Mammary epithelial cell (primary cell): ENCODE measurements at regions of chr9 and their contacts with region 1.

Region 1: GRCh38 chr9:21789541-21790037 is 12.8 kb upstream of the MTAP start:
- DNase-seq: peak; percentile 83
- H3K4me3 ChIP-seq: peak overlapping the region in 2 of 3 experiments; percentile 1 to 30
- H3K27ac ChIP-seq: peak overlapping the region; percentile 30
- H3K4me1 ChIP-seq: peaks cover 6% of the 10 kb centered on the region
- H3K27me3 ChIP-seq: no peaks in the 10 kb centered on the region
- CTCF ChIP-seq: peak; percentile 69 to 85

Region 2: GRCh38 chr9:21317956-21318923 is 471.3 kb before region 1 on chr9:
- CTCF ChIA-PET with region 1: interaction called, 40 read pairs
- dilution Hi-C with region 1: no loop called
- in situ Hi-C with region 1: loop called (anchors 10 kb)
- intact Hi-C with region 1: loop called (anchors 1 kb)
- DNase-seq: peak; percentile 25
- H3K4me3 ChIP-seq: no peak overlapping the region
- H3K27ac ChIP-seq: no peak overlapping the region
- H3K4me1 ChIP-seq: peaks cover 10% of the 10 kb centered on the region
- H3K27me3 ChIP-seq: no peaks in the 10 kb centered on the region
- CTCF ChIP-seq: peak; percentile 69 to 76

Region 3: DNA sequence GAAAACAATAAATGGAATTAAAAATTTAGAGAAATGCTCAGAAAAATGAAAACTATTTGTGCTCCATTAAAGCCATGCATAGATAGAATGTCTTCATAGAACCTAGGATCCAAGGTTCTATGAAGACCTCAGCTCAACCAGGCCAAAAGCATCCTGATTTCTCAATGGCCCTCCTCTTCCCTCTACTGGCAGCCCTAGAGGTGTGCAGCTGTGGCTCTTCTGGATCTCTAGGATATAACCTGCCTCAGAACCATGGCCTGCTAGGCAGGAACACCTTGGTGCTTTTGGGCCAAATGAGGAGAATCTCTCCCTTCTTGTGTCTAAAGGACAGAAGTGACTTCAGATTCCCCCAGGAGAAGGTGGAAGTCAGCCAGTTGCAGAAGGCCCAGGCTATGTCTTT is 334.3 kb before region 1 on chr9:
- CTCF ChIA-PET with region 1: no interaction called
- dilution Hi-C with region 1: no loop called
- in situ Hi-C with region 1: loop called in 1 of 2 experiments (anchors 5 kb)
- intact Hi-C with region 1: no loop called
- DNase-seq: peak; percentile 19
- H3K4me3 ChIP-seq: no peak overlapping the region
- H3K27ac ChIP-seq: no peak overlapping the region
- H3K4me1 ChIP-seq: peaks cover 16% of the 10 kb centered on the region
- H3K27me3 ChIP-seq: no peaks in the 10 kb centered on the region
- CTCF ChIP-seq: peak; percentile 67 to 74

Region 4: DNA sequence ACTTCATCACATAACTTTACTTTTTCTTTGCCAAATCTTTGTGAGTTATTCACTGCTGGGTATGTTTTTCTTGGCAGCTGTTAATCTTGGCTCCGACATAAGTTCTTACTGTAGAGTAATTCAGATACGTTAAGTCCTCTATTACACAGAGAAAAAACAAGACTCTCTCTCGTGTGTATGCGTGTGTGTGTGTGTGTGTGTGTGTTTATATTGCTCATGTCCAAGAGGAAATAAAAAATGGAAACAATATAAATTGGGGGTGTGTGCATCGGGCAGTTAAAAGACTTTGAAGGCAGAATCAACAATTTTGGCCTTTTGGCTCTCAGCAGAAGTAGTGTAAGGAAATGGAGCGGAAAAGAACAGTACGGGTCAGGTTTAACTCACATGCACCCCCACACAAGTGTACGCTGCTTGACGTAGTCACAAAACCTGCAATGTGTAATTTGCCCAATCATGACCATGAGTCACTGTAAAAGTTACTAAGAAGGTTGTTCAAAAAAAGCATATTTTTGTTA is 240.3 kb before region 1 on chr9:
- CTCF ChIA-PET with region 1: no interaction called
- dilution Hi-C with region 1: loop called (anchors 5 kb)
- in situ Hi-C with region 1: loop called (anchors 10 kb)
- intact Hi-C with region 1: loop called (anchors 2 kb)
- DNase-seq: peak; percentile 83
- H3K4me3 ChIP-seq: peak overlapping the region; percentile 18 to 90 (median 30)
- H3K27ac ChIP-seq: peak overlapping the region; percentile 99
- H3K4me1 ChIP-seq: peaks cover 69% of the 10 kb centered on the region
- H3K27me3 ChIP-seq: no peaks in the 10 kb centered on the region
- CTCF ChIP-seq: no peak

Region 5: GRCh38 chr9:21591221-21592062 is 198.1 kb before region 1 on chr9:
- CTCF ChIA-PET with region 1: no interaction called
- dilution Hi-C with region 1: no loop called
- in situ Hi-C with region 1: no loop called
- intact Hi-C with region 1: loop called (anchors 1 kb)
- DNase-seq: peak; percentile 97
- H3K4me3 ChIP-seq: peak overlapping the region; percentile 39 to 77 (median 57)
- H3K27ac ChIP-seq: peak overlapping the region; percentile 97
- H3K4me1 ChIP-seq: peaks cover 18% of the 10 kb centered on the region
- H3K27me3 ChIP-seq: no peaks in the 10 kb centered on the region
- CTCF ChIP-seq: no peak

Region 6: GRCh38 chr9:21709464-21710058 is 80.0 kb before region 1 on chr9:
- CTCF ChIA-PET with region 1: interaction called, 12 read pairs
- dilution Hi-C with region 1: no loop called
- in situ Hi-C with region 1: loop called in 1 of 2 experiments (anchors 5 kb)
- intact Hi-C with region 1: loop called (anchors 1 kb)
- DNase-seq: peak; percentile 57
- H3K4me3 ChIP-seq: no peak overlapping the region
- H3K27ac ChIP-seq: no peak overlapping the region
- H3K4me1 ChIP-seq: peaks cover 37% of the 10 kb centered on the region
- H3K27me3 ChIP-seq: no peaks in the 10 kb centered on the region
- CTCF ChIP-seq: peak; percentile 83 to 96

Region 7: DNA sequence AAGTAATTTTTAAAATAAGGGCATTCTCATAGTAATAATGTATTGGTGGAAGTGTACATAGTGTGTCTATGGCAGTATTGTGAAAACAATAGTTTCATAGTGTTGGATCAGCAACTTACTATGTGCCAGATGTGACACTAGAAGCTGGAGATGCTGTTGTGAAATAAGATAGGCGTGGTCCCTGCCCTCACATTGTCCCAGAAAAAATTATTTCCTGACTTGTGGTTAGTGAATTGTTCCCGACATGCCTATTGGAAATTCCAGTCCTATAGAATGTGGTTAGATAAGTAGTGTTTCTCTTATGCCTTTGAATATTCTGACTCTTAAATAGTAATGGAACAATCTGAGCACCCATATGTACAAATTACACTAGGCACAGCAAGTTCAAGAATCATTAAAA is 42.4 kb before region 1 on chr9:
- CTCF ChIA-PET with region 1: no interaction called
- dilution Hi-C with region 1: no loop called
- in situ Hi-C with region 1: no loop called
- intact Hi-C with region 1: no loop called
- DNase-seq: peak; percentile 88
- H3K4me3 ChIP-seq: no peak overlapping the region
- H3K27ac ChIP-seq: peak overlapping the region; percentile 78
- H3K4me1 ChIP-seq: peaks cover 74% of the 10 kb centered on the region
- H3K27me3 ChIP-seq: no peaks in the 10 kb centered on the region
- CTCF ChIP-seq: no peak